B cell (primary cell): ENCODE measurements at regions of chr16 and their contacts with region 1.

Region 1: DNA sequence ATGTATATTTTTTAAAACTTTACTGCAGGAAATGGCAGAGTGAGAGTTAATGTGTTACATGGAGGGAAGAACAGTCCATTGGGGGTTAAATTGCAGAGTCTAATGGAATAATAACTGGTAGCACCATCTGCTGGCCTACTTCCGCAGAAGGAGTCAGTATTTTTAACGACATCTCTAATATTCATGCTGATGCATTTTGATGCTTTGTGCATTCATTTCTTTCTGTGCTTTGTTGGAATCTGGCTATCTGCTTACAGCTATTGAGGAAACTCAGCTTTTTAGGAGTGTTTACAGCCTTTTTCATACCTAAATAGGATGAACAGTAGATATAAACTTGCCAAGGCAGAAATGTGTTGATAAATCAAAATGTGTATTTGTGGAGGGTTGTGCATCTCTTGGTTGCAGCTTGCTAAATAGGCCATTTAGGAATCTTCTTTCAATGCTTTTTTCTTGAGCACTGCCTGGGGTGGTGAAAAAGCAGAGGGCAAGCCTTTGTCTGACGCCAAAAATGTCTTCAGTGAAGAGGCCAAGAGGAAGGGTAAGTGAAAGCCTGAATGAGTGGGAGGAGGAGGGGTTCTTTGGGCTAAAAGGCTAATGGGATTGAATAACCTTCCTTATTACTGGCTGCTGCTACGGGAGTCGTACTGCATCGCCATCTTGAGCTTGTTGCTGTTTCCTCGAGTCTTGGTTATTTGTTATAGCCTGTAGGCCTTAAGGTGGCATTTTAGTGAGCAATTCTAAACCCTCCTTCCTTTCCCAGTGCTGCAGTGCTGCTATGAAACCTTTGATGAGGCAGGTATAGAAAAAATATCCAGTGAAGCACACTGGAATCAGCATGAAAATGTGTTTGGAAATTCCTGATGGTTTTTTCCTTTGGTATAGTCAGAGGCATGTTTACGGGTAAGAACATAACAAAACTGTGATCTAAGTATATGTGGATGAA is 153.3 kb downstream of the CHD9 start:
- DNase-seq: peak; percentile 70
- ATAC-seq: peak; percentile 74
- H3K4me3 ChIP-seq: peak overlapping the region; percentile 29 to 85 (median 54)
- H3K4me3 Mint-ChIP-seq: peak overlapping the region; percentile 86
- H3K27ac ChIP-seq: peak overlapping the region; percentile 66 to 78
- H3K27ac Mint-ChIP-seq: peak overlapping the region; percentile 94
- H3K4me1 ChIP-seq: peaks cover 21 to 33% of the 10 kb centered on the region in 2 donors
- H3K4me1 Mint-ChIP-seq: peaks cover 36% of the 10 kb centered on the region
- H3K27me3 ChIP-seq: no peaks in the 10 kb centered on the region
- H3K27me3 Mint-ChIP-seq: no peaks in the 10 kb centered on the region
- CTCF ChIP-seq: peak; percentile 82

Region 2: GRCh38 chr16:52976539-52977167 is 231.4 kb before region 1 on chr16:
- CTCF ChIA-PET with region 1: interaction called, 4 read pairs
- POLR2A ChIA-PET with region 1: no interaction called
- intact Hi-C with region 1: loop called (anchors 5 kb)
- DNase-seq: peak; percentile 37
- ATAC-seq: no peak
- H3K4me3 ChIP-seq: no peak overlapping the region
- H3K4me3 Mint-ChIP-seq: no peak overlapping the region
- H3K27ac ChIP-seq: no peak overlapping the region
- H3K27ac Mint-ChIP-seq: no peak overlapping the region
- H3K4me1 ChIP-seq: no peaks in the 10 kb centered on the region
- H3K4me1 Mint-ChIP-seq: no peaks in the 10 kb centered on the region
- H3K27me3 ChIP-seq: peaks cover 0 to 2% (median 0%) of the 10 kb centered on the region in 4 experiments
- H3K27me3 Mint-ChIP-seq: peaks cover 27% of the 10 kb centered on the region
- CTCF ChIP-seq: no peak

Region 3: DNA sequence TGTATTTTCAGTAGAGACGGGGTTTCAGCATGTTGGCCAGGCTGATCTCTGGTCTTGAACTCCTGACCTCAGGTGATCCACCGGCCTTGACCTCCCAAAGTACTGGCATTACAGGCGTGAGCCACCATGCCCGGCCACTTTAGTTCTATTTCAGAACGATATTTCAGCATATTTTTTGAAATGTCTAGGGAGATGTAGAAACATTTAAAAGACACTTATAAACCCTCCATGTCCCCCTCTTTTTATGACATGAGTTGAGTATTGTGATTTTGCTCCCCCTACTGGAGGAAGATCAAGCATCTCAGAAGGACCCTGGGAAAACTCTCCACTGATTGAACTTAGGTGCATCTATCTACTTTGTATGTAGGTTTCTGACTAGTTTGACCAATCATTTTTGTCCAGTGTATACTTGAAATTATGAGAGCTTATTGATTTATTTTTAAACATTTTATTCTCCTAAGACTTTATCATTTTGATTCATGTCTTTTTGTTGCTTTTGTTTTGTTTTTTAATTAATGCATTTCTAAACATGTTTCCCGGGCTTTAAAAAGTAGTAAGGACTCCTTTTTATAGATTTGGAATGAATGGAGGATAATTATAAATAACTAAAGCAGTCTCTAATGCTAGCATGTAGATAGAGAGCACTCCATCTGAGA is 48.2 kb before region 1 on chr16:
- CTCF ChIA-PET with region 1: interaction called, 14 read pairs
- POLR2A ChIA-PET with region 1: no interaction called
- intact Hi-C with region 1: loop called (anchors 5 kb)
- DNase-seq: peak; percentile 77
- ATAC-seq: peak; percentile 77
- H3K4me3 ChIP-seq: no peak overlapping the region
- H3K4me3 Mint-ChIP-seq: no peak overlapping the region
- H3K27ac ChIP-seq: no peak overlapping the region
- H3K27ac Mint-ChIP-seq: no peak overlapping the region
- H3K4me1 ChIP-seq: no peaks in the 10 kb centered on the region
- H3K4me1 Mint-ChIP-seq: no peaks in the 10 kb centered on the region
- H3K27me3 ChIP-seq: no peaks in the 10 kb centered on the region
- H3K27me3 Mint-ChIP-seq: no peaks in the 10 kb centered on the region
- CTCF ChIP-seq: peak; percentile 85

Region 4: DNA sequence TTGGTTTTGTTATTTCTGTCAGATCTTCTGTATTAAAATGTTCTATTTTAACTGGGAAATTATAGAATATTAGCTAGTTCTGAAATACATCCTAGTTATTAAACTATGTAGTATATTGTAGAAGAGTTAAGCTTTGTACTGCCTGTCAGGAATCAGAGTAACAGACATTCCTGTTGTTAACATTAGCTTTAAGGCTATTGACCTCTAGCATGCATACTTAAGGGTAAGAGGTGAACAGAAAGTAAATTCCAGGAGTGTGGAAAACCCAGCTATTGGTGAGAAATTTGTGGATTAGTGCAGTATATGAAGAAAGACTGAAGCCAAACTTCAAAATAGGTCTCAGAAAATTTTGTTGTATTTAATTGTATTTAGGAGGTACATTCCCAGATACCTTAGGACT is 42.0 kb before region 1 on chr16:
- CTCF ChIA-PET with region 1: interaction called, 3 read pairs
- POLR2A ChIA-PET with region 1: no interaction called
- intact Hi-C with region 1: loop called (anchors 5 kb)
- DNase-seq: no peak
- ATAC-seq: no peak
- H3K4me3 ChIP-seq: no peak overlapping the region
- H3K4me3 Mint-ChIP-seq: no peak overlapping the region
- H3K27ac ChIP-seq: no peak overlapping the region
- H3K27ac Mint-ChIP-seq: no peak overlapping the region
- H3K4me1 ChIP-seq: no peaks in the 10 kb centered on the region
- H3K4me1 Mint-ChIP-seq: peaks cover 11% of the 10 kb centered on the region
- H3K27me3 ChIP-seq: no peaks in the 10 kb centered on the region
- H3K27me3 Mint-ChIP-seq: no peaks in the 10 kb centered on the region
- CTCF ChIP-seq: no peak

Region 5: DNA sequence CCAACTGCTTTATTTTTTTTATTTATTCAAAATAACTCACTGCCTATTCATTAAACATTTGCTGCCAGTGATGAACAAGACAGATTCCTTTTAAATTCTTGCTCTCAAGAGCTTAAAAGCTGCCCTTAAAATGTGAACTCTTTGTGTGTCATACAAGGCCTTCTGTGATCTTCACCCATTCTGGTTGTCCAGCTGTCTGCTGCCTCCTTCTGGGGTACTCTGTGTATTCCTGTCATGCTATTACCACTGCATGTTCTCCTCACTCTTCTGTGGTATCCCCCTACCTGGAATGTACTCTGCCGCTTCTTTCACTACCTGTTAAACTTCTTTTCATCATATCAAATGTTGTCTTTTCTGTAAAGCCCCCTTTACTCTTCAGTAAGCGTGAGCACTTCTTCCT is 12.5 kb after region 1 on chr16:
- CTCF ChIA-PET with region 1: interaction called, 9 read pairs
- POLR2A ChIA-PET with region 1: interaction called, 3 read pairs
- intact Hi-C with region 1: loop called (anchors 2 kb)
- DNase-seq: peak; percentile 50
- ATAC-seq: peak; percentile 60
- H3K4me3 ChIP-seq: no peak overlapping the region
- H3K4me3 Mint-ChIP-seq: no peak overlapping the region
- H3K27ac ChIP-seq: peak overlapping the region; percentile 31 to 78
- H3K27ac Mint-ChIP-seq: no peak overlapping the region
- H3K4me1 ChIP-seq: peaks cover 33 to 35% of the 10 kb centered on the region in 2 donors
- H3K4me1 Mint-ChIP-seq: peaks cover 12% of the 10 kb centered on the region
- H3K27me3 ChIP-seq: no peaks in the 10 kb centered on the region
- H3K27me3 Mint-ChIP-seq: no peaks in the 10 kb centered on the region
- CTCF ChIP-seq: peak; percentile 48

Region 6: GRCh38 chr16:53341792-53342191 is 133.7 kb after region 1 on chr16:
- CTCF ChIA-PET with region 1: no interaction called
- POLR2A ChIA-PET with region 1: no interaction called
- intact Hi-C with region 1: no loop called
- DNase-seq: no peak
- ATAC-seq: no peak
- H3K4me3 ChIP-seq: no peak overlapping the region
- H3K4me3 Mint-ChIP-seq: no peak overlapping the region
- H3K27ac ChIP-seq: no peak overlapping the region
- H3K27ac Mint-ChIP-seq: no peak overlapping the region
- H3K4me1 ChIP-seq: no peaks in the 10 kb centered on the region
- H3K4me1 Mint-ChIP-seq: no peaks in the 10 kb centered on the region
- H3K27me3 ChIP-seq: no peaks in the 10 kb centered on the region
- H3K27me3 Mint-ChIP-seq: peaks cover 8% of the 10 kb centered on the region
- CTCF ChIP-seq: no peak